Body of pancreas (tissue), 4 donors: ENCODE measurements at regions of chr3 and their contacts with region 1.

Region 1: DNA sequence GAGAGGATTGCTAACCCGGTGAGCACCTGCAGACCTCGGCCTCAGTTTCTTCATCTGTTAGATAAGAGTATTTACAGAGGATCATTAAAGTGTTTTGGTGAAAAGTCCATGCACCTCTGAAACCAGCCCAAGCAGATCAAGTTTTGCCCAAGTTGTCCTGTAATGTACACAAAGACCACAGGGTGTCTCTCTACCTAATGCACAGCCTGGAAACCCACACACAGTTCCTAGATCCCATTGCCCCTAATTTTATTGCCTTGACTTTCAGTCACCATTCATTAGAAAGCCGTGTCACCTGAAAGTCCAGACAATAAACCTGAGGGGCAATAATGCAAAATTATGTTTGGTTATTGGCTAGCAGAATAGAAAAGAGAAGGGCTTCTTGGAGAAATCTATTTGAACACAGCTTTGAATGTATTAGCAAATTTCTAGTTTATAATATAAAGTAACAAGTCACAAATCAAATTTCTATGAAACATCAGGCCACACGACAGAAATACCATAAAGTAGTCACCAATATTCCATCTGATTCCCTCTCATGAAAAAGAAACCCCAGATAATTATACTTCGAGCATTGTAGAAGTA is 161.3 kb upstream of the SLC2A2 start:
- DNase-seq: peak; percentile 18 to 37 (median 22)
- ATAC-seq: peak; percentile 74
- H3K4me3 ChIP-seq: no peak overlapping the region
- H3K27ac ChIP-seq: no peak overlapping the region
- H3K4me1 ChIP-seq: peaks cover 10% of the 10 kb centered on the region
- H3K27me3 ChIP-seq: no peaks in the 10 kb centered on the region
- CTCF ChIP-seq: peak in 6 of 7 experiments; percentile 49 to 76 (median 70)
- POLR2A ChIP-seq: no peak

Region 2: GRCh38 chr3:171459942-171460724 is 272.3 kb after region 1 on chr3 and contains the start of gene TNIK:
- intact Hi-C with region 1: loop called (anchors 10 kb)
- DNase-seq: peak; percentile 88 to 94 (median 92)
- ATAC-seq: peak; percentile 89
- H3K4me3 ChIP-seq: peak within 1 kb of the TSS; percentile 80 to 91
- H3K27ac ChIP-seq: peak within 1 kb of the TSS; percentile 42 to 81 (median 71)
- H3K4me1 ChIP-seq: peaks cover 28% of the 10 kb centered on the region
- H3K27me3 ChIP-seq: no peaks in the 10 kb centered on the region
- CTCF ChIP-seq: peak in 4 of 7 experiments; percentile 21 to 58 (median 39)
- POLR2A ChIP-seq: peak; percentile 34 to 57 (median 51)
- total RNA-seq, gene TNIK: 7.6 to 9.6 TPM